Mammary epithelial cell (primary cell): ENCODE measurements at regions of chr12 and their contacts with region 1.

Region 1: GRCh38 chr12:43501703-43502102 is 50.3 kb downstream of the ADAMTS20 start:
- DNase-seq: peak; percentile 11
- H3K4me3 ChIP-seq: no peak overlapping the region
- H3K27ac ChIP-seq: no peak overlapping the region
- H3K4me1 ChIP-seq: no peaks in the 10 kb centered on the region
- H3K27me3 ChIP-seq: no peaks in the 10 kb centered on the region
- CTCF ChIP-seq: peak; percentile 34 to 65

Region 2: GRCh38 chr12:43676183-43676813 is 174.6 kb after region 1 on chr12:
- CTCF ChIA-PET with region 1: no interaction called
- dilution Hi-C with region 1: no loop called
- in situ Hi-C with region 1: no loop called
- intact Hi-C with region 1: loop called (anchors 1 kb)
- DNase-seq: peak; percentile 12
- H3K4me3 ChIP-seq: no peak overlapping the region
- H3K27ac ChIP-seq: no peak overlapping the region
- H3K4me1 ChIP-seq: no peaks in the 10 kb centered on the region
- H3K27me3 ChIP-seq: peaks cover 6% of the 10 kb centered on the region
- CTCF ChIP-seq: peak; percentile 72 to 77

Region 3: DNA sequence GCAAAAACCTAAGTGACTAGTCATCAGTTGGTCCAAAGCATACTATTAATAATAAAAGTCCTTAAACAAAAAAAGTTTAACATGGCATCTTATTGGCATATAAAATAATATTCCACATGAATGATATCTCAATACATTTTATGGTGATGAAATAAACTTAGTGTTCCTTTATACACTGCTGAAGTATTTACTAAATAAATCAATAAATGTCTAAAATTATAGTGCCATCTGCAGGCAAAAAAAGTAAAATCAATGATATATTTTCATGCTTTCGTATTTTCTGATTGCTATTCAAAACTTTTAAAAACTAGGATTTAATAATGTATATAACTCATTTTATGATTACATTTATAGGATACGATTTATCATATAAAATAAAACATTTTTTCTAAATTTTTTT is 226.4 kb after region 1 on chr12:
- CTCF ChIA-PET with region 1: no interaction called
- dilution Hi-C with region 1: no loop called
- in situ Hi-C with region 1: no loop called
- intact Hi-C with region 1: loop called (anchors 2 kb)
- DNase-seq: no peak
- H3K4me3 ChIP-seq: no peak overlapping the region
- H3K27ac ChIP-seq: no peak overlapping the region
- H3K4me1 ChIP-seq: no peaks in the 10 kb centered on the region
- H3K27me3 ChIP-seq: no peaks in the 10 kb centered on the region
- CTCF ChIP-seq: peak; percentile 17 to 21